Activated T-helper 2 cell treated with anti-CD3 and anti-CD28 coated beads, Interferon-gamma antibody, Interleukin-2, Interleukin-4, amounts not matched to agents 10 μg/mL and 5 μg/mL and 100 μg/mL, durations not matched to agents 14 hours and 24 hours and 36 hours (primary cell): ENCODE measurements at regions of chr10 and their contacts with region 1.

Region 1: DNA sequence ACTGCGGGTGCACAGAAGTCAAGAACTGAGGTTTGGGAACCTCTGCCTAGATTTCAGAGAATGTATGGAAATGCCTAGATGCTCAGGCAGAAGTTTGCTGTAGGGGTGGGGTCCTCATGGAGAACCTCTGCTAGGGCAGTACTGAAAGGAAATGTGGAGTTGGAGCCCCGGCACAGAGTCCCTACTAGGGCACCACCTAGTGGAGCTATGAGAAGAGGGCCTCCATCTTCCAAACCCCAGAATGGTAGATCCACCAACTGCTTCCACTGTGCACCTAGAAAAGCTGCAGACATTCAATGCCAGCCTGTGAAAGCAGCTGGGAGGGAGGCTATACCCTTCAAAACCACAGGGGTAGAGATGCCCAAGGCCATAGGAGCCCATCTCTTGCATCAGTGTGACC is 1336.0 kb upstream of the CELF2 start:
- DNase-seq: no peak
- H3K4me3 Mint-ChIP-seq: no peak overlapping the region
- H3K27ac Mint-ChIP-seq: no peak overlapping the region
- H3K4me1 Mint-ChIP-seq: no peaks in the 10 kb centered on the region
- H3K27me3 Mint-ChIP-seq: no peaks in the 10 kb centered on the region

Region 2: DNA sequence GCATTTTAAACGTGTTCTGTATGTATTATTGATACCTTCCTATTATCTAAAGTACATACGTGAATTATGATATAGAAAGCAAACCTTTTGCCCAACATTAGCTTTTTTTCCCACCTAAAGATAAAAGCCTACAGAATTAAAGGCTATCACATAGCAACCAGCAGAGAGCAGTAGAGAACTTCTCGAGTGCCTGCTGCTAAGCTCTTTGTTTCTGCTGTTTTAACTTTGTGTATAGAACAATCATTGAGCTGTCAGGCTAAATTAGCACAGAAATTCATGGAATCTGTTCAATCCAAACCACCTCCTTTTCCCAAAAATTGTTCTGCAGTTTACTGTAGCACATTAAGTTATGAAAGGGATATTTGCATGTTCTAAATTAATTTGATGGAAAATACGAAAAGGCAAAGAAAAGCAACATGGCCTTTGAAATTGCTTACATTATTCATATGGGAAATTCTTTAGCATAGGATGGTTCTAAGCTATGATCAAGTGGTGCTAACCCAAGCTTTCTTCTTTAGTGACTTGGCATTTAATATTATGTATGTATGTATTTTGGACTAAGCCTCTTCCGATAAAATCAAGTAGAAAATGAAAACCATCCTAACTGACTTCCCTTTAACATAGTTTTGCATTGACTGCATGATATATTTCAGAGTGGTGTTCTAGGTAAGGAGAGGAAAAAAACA is 338.6 kb before region 1 on chr10:
- intact Hi-C with region 1: loop called (anchors 10 kb)
- DNase-seq: no peak
- H3K4me3 Mint-ChIP-seq: no peak overlapping the region
- H3K27ac Mint-ChIP-seq: no peak overlapping the region
- H3K4me1 Mint-ChIP-seq: peaks cover 18% of the 10 kb centered on the region
- H3K27me3 Mint-ChIP-seq: peaks cover 20% of the 10 kb centered on the region